ENCODE measurements at regions of chr22 and their contacts with region 1.

Region 1: DNA sequence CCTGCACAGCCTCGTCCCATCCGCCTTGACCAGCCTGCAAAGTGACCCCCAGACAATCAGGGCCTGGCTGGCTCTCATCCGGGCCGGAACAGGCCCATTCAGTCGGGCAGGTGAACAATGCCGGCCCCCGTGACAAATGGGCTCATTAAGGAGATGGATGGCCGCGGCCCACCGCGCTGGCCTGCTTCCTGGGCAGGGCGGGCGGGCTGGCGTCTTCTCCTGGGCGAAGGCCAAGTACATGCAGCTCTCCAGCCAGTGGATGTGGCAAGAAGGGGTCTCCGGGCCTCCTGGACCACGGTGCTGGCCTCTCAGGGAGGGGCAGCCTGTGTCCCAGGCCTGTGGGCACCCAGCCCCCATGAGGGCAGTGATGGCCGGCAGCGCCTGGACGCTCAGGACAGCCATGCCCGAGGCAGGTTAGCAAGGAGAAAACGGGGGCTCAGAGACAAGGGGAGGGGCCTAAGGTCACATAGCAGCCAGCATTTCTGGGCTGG is 1022.8 kb downstream of the BRD1 start:
- DNase-seq: no peak
- H3K4me3 ChIP-seq: no peak overlapping the region
- H3K27ac ChIP-seq: no peak overlapping the region
- H3K4me1 ChIP-seq: no peaks in the 10 kb centered on the region
- H3K27me3 ChIP-seq: no peaks in the 10 kb centered on the region
- CTCF ChIP-seq: no peak
- POLR2A ChIP-seq: no peak

Region 2: GRCh38 chr22:48754611-48755058 is 50.2 kb before region 1 on chr22:
- intact Hi-C with region 1: loop called (anchors 5 kb)
- DNase-seq: no peak
- H3K4me3 ChIP-seq: no peak overlapping the region
- H3K27ac ChIP-seq: no peak overlapping the region
- H3K4me1 ChIP-seq: no peaks in the 10 kb centered on the region
- H3K27me3 ChIP-seq: no peaks in the 10 kb centered on the region
- CTCF ChIP-seq: no peak
- POLR2A ChIP-seq: no peak